OCI-LY7 (cell line): ENCODE measurements at regions of chr10 and their contacts with region 1.

Region 1: DNA sequence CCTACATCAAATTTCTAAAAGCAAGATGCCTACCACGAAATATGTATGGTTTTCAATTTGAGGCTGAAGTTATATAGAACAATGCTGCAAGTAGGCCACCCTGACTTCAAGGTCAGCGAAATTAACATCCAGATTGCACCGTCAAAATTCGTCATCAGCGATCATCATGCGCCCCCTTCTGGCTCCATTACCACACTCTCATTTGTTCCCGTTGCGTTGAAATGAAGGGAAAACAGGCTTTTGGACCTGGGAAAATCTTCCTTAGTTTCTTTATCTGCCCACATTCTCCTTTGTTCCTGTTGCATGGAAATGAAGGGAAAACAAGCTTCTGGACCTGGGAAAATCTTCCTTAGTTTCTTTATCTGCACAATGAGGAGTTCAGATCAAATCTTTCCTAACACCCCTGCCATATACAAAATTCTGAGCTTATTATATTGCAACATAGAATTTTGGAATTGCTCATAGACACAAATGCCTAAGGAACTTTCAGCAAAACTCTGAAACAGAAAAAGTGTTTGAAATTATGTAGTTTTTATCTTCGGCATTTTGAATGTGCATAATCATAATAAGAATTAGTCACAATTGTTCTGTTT is 98.2 kb upstream of the PRKCQ start:
- DNase-seq: peak; percentile 59
- H3K4me3 ChIP-seq: no peak overlapping the region
- H3K27ac ChIP-seq: no peak overlapping the region
- H3K4me1 ChIP-seq: peaks cover 22% of the 10 kb centered on the region
- CTCF ChIP-seq: peak; percentile 93

Region 2: GRCh38 chr10:6416892-6417512 is 261.3 kb before region 1 on chr10:
- CTCF ChIA-PET with region 1: no interaction called
- POLR2A ChIA-PET with region 1: interaction called, 3 read pairs
- intact Hi-C with region 1: loop called (anchors 1 kb)
- DNase-seq: peak; percentile 69
- H3K4me3 ChIP-seq: no peak overlapping the region
- H3K27ac ChIP-seq: no peak overlapping the region
- H3K4me1 ChIP-seq: no peaks in the 10 kb centered on the region
- CTCF ChIP-seq: peak; percentile 94

Region 3: DNA sequence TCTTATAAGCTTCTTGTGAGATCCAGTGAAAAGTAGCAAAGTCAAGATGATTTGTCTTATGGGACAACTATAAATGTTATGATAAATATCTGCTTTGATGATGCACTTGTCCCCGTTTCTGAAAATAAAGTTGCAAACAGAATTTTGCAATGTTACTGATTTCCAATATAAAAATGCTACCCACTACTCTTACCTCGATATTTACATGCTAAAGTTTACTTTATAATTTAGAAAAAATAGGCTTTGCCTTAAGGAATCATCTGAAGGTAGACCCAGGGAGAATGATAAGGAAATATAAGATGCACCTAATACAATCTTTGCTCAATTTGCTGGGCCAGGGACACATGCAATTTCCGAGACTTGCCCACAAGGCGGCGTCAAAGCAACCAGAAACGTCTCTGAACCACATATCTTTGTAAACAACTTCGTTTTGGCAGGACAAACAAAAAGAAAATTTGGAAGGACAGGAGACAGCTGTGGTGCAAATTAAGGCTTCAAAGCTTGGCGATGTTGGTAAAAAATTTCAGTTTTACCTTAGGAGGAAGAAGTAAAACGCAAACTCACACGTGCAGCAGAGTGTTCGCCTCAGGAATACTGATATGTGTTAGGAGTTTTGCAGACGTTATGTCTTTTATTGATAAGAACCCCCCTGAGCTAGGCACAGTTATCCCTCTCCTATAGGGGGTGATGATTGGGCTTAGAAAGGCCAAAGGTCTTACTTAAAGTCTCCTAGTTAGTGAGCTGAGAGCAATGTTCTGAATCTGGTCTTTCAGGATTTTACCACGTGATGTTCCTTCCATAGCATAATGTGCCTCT is 232.6 kb before region 1 on chr10:
- CTCF ChIA-PET with region 1: no interaction called
- POLR2A ChIA-PET with region 1: no interaction called
- intact Hi-C with region 1: loop called (anchors 5 kb)
- DNase-seq: peak; percentile 57
- H3K4me3 ChIP-seq: no peak overlapping the region
- H3K27ac ChIP-seq: no peak overlapping the region
- H3K4me1 ChIP-seq: no peaks in the 10 kb centered on the region
- CTCF ChIP-seq: peak; percentile 97

Region 4: DNA sequence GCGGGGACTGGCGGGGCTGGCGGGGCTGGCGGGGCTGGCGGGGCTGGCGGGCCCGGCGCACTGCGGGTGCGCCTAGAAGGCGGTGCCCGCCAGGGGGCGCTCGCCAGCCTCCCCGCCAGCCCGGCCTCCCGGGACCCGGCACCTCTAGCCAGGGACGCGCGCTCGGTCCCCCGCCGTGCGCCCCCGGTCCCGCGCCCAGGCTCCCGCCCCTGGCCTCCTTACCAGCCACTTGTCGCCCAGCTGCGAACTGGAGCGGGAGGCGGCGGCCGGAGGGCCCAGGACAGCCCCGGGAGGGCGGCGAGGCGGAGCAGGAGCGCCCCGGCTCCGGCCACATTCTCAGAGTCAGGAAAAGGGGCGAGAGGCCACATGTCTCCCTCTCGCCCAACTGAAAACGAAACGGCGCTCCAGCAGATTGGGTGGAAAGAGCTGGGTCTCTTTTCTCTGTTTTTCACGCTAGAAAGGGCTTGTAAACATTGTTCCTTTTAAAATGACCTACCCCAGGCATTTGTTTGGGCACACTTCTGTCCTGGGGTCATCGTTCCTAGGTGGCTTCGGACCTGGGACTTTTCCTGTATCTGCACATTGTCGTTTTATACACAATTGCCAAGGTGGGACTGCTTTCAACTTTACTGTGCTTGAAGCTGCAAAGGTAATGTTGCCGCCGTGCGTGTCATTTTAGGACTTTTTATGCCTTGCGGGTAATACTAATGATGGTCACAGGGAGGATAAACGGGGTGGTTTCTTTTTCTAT is 97.9 kb before region 1 on chr10:
- CTCF ChIA-PET with region 1: no interaction called
- POLR2A ChIA-PET with region 1: no interaction called
- intact Hi-C with region 1: loop called (anchors 2 kb)
- DNase-seq: peak; percentile 85
- H3K4me3 ChIP-seq: peak overlapping the region; percentile 71
- H3K27ac ChIP-seq: peak overlapping the region; percentile 47
- H3K4me1 ChIP-seq: peaks cover 27% of the 10 kb centered on the region
- CTCF ChIP-seq: peak; percentile 46

Region 5: DNA sequence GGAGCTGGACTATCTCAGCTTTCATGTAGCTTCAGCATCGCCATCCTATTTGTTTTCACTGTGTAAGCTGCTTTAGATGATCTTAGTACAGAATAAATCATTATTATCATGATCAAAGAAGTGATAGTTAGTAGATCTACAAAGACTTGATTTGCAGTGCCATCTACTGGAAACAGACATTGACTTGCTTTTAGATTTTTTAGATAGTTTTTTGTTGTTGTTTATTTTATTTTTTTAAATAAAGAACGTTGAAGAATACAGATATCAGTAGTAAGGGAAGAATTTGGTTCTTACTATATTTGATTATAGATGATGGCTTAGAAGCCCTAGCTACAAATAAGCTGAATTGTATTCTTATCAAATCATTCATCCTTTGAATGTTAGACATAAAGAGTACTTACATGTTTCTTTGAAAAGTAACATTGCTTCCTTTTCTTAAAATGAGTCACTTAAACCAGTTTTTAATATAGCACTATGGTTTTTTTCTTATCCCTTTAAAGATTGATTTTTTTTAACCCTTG is 738.9 kb after region 1 on chr10:
- CTCF ChIA-PET with region 1: no interaction called
- POLR2A ChIA-PET with region 1: no interaction called
- intact Hi-C with region 1: loop called (anchors 5 kb)
- DNase-seq: peak; percentile 61
- H3K4me3 ChIP-seq: no peak overlapping the region
- H3K27ac ChIP-seq: no peak overlapping the region
- H3K4me1 ChIP-seq: peaks cover 3% of the 10 kb centered on the region
- CTCF ChIP-seq: peak; percentile 98